ENCODE measurements at regions of chr1 and their contacts with region 1.

Region 1: GRCh38 chr1:89001510-89001909 is 9.1 kb upstream of the KYAT3 start:
- DNase-seq: no peak
- ATAC-seq: no peak
- H3K4me3 ChIP-seq: no peak overlapping the region
- H3K27ac ChIP-seq: no peak overlapping the region
- H3K4me1 ChIP-seq: no peaks in the 10 kb centered on the region
- H3K27me3 ChIP-seq: no peaks in the 10 kb centered on the region
- CTCF ChIP-seq: no peak
- POLR2A ChIP-seq: no peak

Region 2: DNA sequence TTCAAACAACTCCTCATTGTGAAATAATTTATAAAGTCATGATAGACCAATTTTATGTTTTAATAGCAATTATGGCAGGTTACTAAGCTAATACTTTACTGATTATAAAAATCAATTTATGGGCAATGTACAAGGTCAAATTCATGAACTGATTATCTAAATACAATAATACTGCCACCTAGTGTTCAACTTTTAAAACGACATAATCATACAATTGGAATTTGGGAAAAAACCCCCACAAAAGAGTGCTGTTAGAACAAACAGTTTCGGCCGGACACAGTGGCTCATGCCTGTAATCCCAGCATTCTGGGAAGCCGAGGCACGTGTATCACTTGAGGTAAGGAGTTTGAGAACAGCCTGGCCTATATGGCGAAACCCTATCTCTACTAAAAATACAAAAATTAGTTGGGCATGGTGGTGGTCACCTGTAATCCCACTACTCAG is 124.1 kb before region 1 on chr1:
- intact Hi-C with region 1: no loop called
- DNase-seq: no peak
- ATAC-seq: peak; percentile 38
- H3K4me3 ChIP-seq: no peak overlapping the region
- H3K27ac ChIP-seq: peak overlapping the region in 2 of 4 donors; percentile 30 to 38
- H3K4me1 ChIP-seq: peaks cover 29% of the 10 kb centered on the region
- H3K27me3 ChIP-seq: no peaks in the 10 kb centered on the region
- CTCF ChIP-seq: peak; percentile 15 to 73 (median 52)
- POLR2A ChIP-seq: no peak

Region 3: DNA sequence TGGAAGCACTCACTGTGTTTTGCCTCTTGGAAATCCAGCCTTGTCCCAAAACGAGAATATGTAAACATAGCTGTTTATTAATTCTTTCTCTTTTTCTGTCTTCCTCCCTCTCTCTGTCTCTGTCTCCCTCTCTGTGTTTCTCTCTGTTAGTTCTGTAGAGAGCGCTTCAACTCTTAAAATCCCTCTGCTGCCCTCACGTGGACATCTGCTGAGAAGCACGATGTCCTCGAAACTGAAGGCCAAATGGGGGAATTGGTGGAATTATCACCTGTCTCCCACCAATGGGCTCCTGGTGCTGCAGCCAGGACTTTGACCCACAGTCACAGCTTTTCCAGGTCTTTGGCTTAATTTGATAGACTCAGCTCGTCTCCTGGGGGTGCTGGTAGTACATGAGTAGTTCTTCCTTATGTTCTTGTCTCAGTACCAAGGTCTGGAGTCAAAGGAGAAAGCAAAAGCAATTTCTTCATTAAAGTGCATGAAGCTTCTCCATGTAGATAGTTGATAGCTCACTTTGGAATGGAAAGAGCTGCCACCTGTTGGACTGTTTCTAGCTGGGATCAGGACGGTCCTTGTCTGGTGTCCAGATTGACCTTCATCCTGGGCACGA is 356.9 kb after region 1 on chr1:
- intact Hi-C with region 1: loop called (anchors 5 kb)
- DNase-seq: peak; percentile 80 to 89 (median 84)
- ATAC-seq: peak; percentile 91
- H3K4me3 ChIP-seq: no peak overlapping the region
- H3K27ac ChIP-seq: no peak overlapping the region
- H3K4me1 ChIP-seq: no peaks in the 10 kb centered on the region
- H3K27me3 ChIP-seq: no peaks in the 10 kb centered on the region
- CTCF ChIP-seq: peak in 6 of 7 experiments; percentile 68 to 82 (median 78)
- POLR2A ChIP-seq: no peak

Region 4: DNA sequence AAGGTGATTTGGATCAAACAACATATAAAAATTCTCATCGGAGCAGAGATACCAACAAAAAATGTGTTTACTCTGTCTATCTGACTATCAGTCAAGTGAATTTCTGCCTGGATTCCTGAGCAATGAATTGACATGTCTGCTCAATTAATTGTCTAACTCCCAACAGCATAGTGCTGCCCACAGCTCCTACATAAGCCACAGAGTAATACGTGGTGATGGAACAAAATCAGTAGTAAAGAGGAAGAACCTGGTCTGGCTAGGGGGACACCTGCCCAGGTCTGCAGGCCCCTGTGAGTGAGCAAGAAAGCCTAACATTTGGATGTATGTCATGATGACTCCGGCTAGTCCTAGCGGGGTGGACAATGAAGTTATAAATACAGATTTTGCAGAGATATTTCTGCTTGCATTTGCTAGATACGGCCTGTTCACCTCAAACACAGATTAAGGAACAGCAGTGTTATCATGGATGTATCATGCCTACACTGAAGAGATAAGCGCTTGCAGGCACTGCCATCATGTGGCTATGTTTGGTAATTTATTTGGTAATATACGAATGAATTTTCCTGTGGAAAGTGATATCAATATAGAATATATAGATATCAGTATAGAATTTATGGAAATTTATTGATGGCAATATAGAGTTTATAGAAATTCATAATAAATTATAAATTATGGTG is 453.5 kb after region 1 on chr1:
- intact Hi-C with region 1: loop called (anchors 10 kb)
- DNase-seq: peak; percentile 31 to 54 (median 42)
- ATAC-seq: peak; percentile 65
- H3K4me3 ChIP-seq: no peak overlapping the region
- H3K27ac ChIP-seq: no peak overlapping the region
- H3K4me1 ChIP-seq: no peaks in the 10 kb centered on the region
- H3K27me3 ChIP-seq: no peaks in the 10 kb centered on the region
- CTCF ChIP-seq: peak; percentile 43 to 74 (median 65)
- POLR2A ChIP-seq: no peak

Region 5: GRCh38 chr1:89524369-89525168 is 523.1 kb after region 1 on chr1 and contains the start of gene LRRC8B:
- intact Hi-C with region 1: no loop called
- DNase-seq: peak; percentile 88 to 92 (median 90)
- ATAC-seq: peak; percentile 97
- H3K4me3 ChIP-seq: peak within 1 kb of the TSS; percentile 51 to 64
- H3K27ac ChIP-seq: peak within 1 kb of the TSS; percentile 97 to 99 (median 98)
- H3K4me1 ChIP-seq: peaks cover 40% of the 10 kb centered on the region
- H3K27me3 ChIP-seq: no peaks in the 10 kb centered on the region
- CTCF ChIP-seq: peak in 2 of 7 experiments; percentile 13 to 31
- POLR2A ChIP-seq: peak; percentile 86 to 92 (median 88)
- total RNA-seq, gene LRRC8B: 6.0 to 23.4 TPM

Measured in body of pancreas (tissue), 4 donors.